ENCODE measurements at regions of chr20 and their contacts with region 1.

Region 1: GRCh38 chr20:50153485-50154377 is at the start of gene PEDS1:
- DNase-seq: peak; percentile 77 to 86 (median 82)
- H3K4me3 ChIP-seq: peak within 1 kb of the TSS; percentile 83 to 87
- H3K4me3 Mint-ChIP-seq: peak within 1 kb of the TSS; percentile 87 to 94 (median 90)
- H3K27ac ChIP-seq: peak within 1 kb of the TSS; percentile 81
- H3K27ac Mint-ChIP-seq: peak within 1 kb of the TSS; percentile 93 to 96 (median 95)
- H3K4me1 ChIP-seq: peaks cover 50% of the 10 kb centered on the region
- H3K4me1 Mint-ChIP-seq: peaks cover 33 to 53% (median 42%) of the 10 kb centered on the region in 4 donors
- H3K27me3 ChIP-seq: no peaks in the 10 kb centered on the region
- H3K27me3 Mint-ChIP-seq: no peaks in the 10 kb centered on the region
- total RNA-seq, gene PEDS1: 16.8 TPM

Region 2: GRCh38 chr20:50085452-50086365 is 68.0 kb before region 1 on chr20:
- CTCF ChIA-PET with region 1: interaction called, 12 read pairs
- POLR2A ChIA-PET with region 1: no interaction called
- intact Hi-C with region 1: no loop called
- DNase-seq: peak; percentile 39 to 53 (median 47)
- H3K4me3 ChIP-seq: peak overlapping the region in 1 of 2 donors; percentile 17
- H3K4me3 Mint-ChIP-seq: peak overlapping the region; percentile 82 to 91 (median 84)
- H3K27ac ChIP-seq: peak overlapping the region; percentile 27
- H3K27ac Mint-ChIP-seq: peak overlapping the region; percentile 44 to 92 (median 77)
- H3K4me1 ChIP-seq: peaks cover 17% of the 10 kb centered on the region
- H3K4me1 Mint-ChIP-seq: peaks cover 18 to 40% (median 28%) of the 10 kb centered on the region in 4 donors
- H3K27me3 ChIP-seq: no peaks in the 10 kb centered on the region
- H3K27me3 Mint-ChIP-seq: no peaks in the 10 kb centered on the region

Region 3: GRCh38 chr20:50110141-50110925 is 43.4 kb before region 1 on chr20:
- CTCF ChIA-PET with region 1: interaction called, 43 read pairs
- POLR2A ChIA-PET with region 1: interaction called, 76 read pairs
- intact Hi-C with region 1: no loop called
- DNase-seq: peak; percentile 47 to 68 (median 54)
- H3K4me3 ChIP-seq: peak overlapping the region in 1 of 2 donors; percentile 0
- H3K4me3 Mint-ChIP-seq: peak overlapping the region; percentile 74 to 99 (median 98)
- H3K27ac ChIP-seq: peak overlapping the region; percentile 88
- H3K27ac Mint-ChIP-seq: peak overlapping the region; percentile 83 to 99 (median 92)
- H3K4me1 ChIP-seq: peaks cover 91% of the 10 kb centered on the region
- H3K4me1 Mint-ChIP-seq: peaks cover 69 to 95% (median 84%) of the 10 kb centered on the region in 4 donors
- H3K27me3 ChIP-seq: no peaks in the 10 kb centered on the region
- H3K27me3 Mint-ChIP-seq: no peaks in the 10 kb centered on the region

Region 4: GRCh38 chr20:50120897-50121693 is 32.6 kb before region 1 on chr20:
- CTCF ChIA-PET with region 1: interaction called, 70 read pairs
- POLR2A ChIA-PET with region 1: interaction called, 76 read pairs
- intact Hi-C with region 1: no loop called
- DNase-seq: peak; percentile 59 to 69 (median 67)
- H3K4me3 ChIP-seq: no peak overlapping the region
- H3K4me3 Mint-ChIP-seq: no peak overlapping the region
- H3K27ac ChIP-seq: no peak overlapping the region
- H3K27ac Mint-ChIP-seq: peak overlapping the region in 1 of 7 donors; percentile 68
- H3K4me1 ChIP-seq: peaks cover 4% of the 10 kb centered on the region
- H3K4me1 Mint-ChIP-seq: peaks cover under 1 to 8% (median 7%) of the 10 kb centered on the region in 4 donors
- H3K27me3 ChIP-seq: no peaks in the 10 kb centered on the region
- H3K27me3 Mint-ChIP-seq: no peaks in the 10 kb centered on the region

Region 5: GRCh38 chr20:50179507-50180016 is 25.8 kb after region 1 on chr20:
- CTCF ChIA-PET with region 1: interaction called, 10 read pairs
- POLR2A ChIA-PET with region 1: interaction called, 3 read pairs
- intact Hi-C with region 1: no loop called
- DNase-seq: peak in 1 of 5 donors; percentile 4
- H3K4me3 ChIP-seq: no peak overlapping the region
- H3K4me3 Mint-ChIP-seq: no peak overlapping the region
- H3K27ac ChIP-seq: no peak overlapping the region
- H3K27ac Mint-ChIP-seq: peak overlapping the region in 1 of 7 donors; percentile 53
- H3K4me1 ChIP-seq: no peaks in the 10 kb centered on the region
- H3K4me1 Mint-ChIP-seq: peaks cover 0 to 7% (median 0%) of the 10 kb centered on the region in 4 donors
- H3K27me3 ChIP-seq: no peaks in the 10 kb centered on the region
- H3K27me3 Mint-ChIP-seq: peaks cover 2 to 4% of the 10 kb centered on the region in 2 donors

Measured in CD4-positive, alpha-beta memory T cell (primary cell).